Posterior vena cava (tissue), 2 donors: ENCODE measurements at regions of chr18 and their contacts with region 1.

Region 1: GRCh38 chr18:78643004-78643403 is 336.6 kb upstream of the SALL3 start:
- DNase-seq: no peak

Region 2: GRCh38 chr18:77737412-77737811 is 905.6 kb before region 1 on chr18:
- intact Hi-C with region 1: no loop called
- DNase-seq: no peak

Region 3: GRCh38 chr18:78041218-78041617 is 601.8 kb before region 1 on chr18:
- intact Hi-C with region 1: loop called in 1 of 2 experiments (anchors 5 kb)
- DNase-seq: no peak

Region 4: GRCh38 chr18:78699516-78699915 is 56.5 kb after region 1 on chr18:
- intact Hi-C with region 1: no loop called
- DNase-seq: no peak

Region 5: DNA sequence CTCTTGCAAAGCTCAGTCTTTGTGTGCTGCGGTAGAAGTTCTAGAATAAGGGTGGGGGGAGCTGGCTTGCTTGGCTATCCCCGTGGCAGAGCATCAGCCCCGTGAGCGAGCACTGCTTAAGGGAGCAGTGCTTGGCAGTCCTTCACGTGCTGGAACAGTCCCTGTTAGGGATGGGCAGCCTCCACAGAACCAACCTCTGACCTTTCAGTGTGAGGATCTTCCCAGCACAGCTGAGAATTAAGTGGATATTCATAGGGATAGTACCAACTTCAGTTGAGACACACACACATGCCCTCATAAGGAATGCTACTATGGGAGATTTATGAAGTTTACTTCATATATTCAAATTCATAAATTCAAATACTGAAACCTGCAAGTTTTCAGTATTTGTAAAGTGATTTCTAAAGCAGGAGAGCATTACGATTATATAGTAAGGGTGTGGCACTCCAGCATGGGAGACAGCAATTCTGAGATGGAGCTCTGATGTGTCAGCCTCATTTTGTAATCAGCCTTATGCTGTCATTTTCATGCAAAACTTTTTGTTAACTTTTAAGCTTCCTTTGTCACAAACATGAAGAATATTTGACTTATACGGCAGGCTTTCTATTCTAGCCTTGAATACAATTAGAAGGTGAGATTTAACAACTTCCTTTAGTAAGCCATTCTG is 465.7 kb after region 1 on chr18:
- intact Hi-C with region 1: no loop called
- DNase-seq: no peak